MCF 10A (cell line): ENCODE measurements at regions of chr5 and their contacts with region 1.

Region 1: DNA sequence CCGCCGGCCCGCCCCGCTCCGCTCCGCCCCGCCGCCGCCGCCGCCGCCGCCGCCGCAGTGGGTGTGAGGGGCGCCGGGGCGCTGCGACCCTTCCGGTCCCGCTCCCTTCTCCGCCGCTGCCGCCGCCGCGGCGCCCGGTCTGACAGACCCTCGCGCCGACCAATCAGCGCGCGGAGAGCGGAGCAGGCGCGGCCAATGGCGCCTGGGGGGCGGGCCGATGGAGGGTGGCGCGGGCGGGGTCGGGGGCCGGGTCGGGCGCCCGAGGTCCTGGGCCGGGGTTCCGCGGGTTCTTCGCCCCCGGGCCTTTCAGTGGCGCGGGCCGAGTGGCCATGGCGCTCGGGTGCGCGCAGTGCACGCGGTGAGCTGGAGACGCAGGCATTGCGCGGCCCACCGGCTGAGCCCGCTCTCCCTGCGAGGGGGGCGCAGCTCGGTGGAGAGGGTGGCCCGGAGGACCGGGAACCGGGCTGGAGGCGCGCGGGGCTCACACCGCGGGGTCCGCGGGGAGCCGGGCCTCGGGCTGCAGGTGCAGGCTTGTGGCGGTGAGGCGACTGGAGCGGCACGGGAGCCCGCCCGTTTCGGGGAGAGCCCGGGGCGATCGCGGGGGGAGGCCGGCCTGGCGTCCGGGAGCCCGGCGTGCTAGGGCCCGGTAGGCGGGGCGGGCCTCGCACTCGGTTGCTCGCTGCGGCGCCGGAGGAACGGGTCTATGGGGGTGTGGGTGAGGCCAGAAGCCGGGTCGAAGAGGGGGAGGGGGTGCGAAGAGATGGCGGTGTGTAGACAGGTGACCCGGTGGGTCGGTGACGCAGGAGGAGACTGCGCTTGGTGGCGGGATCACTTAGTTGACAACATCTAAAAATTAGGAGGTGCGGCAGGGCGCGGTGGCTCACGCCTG is at the start of gene MAPK9:
- DNase-seq: peak; percentile 89
- H3K4me3 Mint-ChIP-seq: peak within 1 kb of the TSS; percentile 71
- H3K27ac Mint-ChIP-seq: peak within 1 kb of the TSS; percentile 81
- H3K4me1 Mint-ChIP-seq: peaks cover 52% of the 10 kb centered on the region
- H3K27me3 Mint-ChIP-seq: no peaks in the 10 kb centered on the region
- CTCF ChIP-seq: no peak
- total RNA-seq, gene MAPK9: 64.0 and 70.8 TPM in 2 replicates

Region 2: GRCh38 chr5:180116077-180116999 is 175.8 kb before region 1 on chr5:
- CTCF ChIA-PET with region 1: no interaction called
- POLR2A ChIA-PET with region 1: no interaction called
- intact Hi-C with region 1: no loop called
- DNase-seq: no peak
- H3K4me3 Mint-ChIP-seq: no peak overlapping the region
- H3K27ac Mint-ChIP-seq: no peak overlapping the region
- H3K4me1 Mint-ChIP-seq: no peaks in the 10 kb centered on the region
- H3K27me3 Mint-ChIP-seq: no peaks in the 10 kb centered on the region
- CTCF ChIP-seq: no peak

Region 3: DNA sequence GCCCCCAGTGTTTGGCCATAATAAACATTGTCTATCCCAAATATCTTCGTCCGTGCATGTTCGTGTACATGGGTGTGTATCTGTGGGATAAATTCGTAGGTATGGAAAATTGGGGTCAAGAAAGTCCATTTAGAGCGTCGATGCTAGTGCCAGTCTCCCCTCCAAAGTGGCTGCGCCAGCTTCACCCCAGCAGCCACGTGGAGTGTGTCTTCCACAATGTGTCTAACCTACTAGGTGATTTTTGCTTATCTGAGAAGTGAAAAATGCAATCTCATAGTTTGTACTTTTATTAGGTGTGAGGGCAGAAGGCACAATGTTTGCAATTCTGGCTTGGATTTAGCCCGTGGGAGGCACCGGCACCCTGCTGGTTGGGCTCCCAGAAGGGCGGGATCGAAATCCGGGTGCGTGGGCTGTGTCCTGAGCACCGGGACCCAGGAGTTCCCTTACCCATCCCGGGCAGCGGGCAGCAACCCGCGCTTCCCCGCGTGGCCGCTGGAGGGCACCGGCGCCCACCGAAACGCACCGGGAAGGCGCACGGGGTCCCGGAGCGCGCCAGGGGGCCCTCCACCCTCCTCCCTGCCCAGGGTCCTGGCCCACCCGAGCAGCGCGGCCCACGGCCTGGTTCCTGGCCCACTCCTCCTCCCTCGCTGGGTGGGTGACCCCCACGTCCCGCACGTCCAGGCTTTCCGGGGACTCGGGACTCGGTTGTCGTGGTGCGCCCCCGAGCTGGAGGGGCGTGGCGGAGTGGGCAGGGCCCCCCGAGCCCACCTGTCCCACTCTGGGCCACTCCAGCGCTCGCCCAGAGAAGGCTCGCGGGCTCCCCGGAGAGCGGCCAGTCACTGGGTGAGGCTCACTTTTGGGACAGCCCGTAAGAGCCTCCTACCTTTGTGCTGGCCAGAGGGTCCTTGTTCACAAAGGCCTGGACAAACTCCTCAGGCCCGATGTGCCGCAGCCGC is 165.2 kb before region 1 on chr5:
- CTCF ChIA-PET with region 1: interaction called, 8 read pairs
- POLR2A ChIA-PET with region 1: interaction called, 3 read pairs
- intact Hi-C with region 1: loop called (anchors 2 kb)
- DNase-seq: peak; percentile 58
- H3K4me3 Mint-ChIP-seq: no peak overlapping the region
- H3K27ac Mint-ChIP-seq: no peak overlapping the region
- H3K4me1 Mint-ChIP-seq: peaks cover 17% of the 10 kb centered on the region
- H3K27me3 Mint-ChIP-seq: peaks cover 32% of the 10 kb centered on the region
- CTCF ChIP-seq: peak; percentile 99

Region 4: DNA sequence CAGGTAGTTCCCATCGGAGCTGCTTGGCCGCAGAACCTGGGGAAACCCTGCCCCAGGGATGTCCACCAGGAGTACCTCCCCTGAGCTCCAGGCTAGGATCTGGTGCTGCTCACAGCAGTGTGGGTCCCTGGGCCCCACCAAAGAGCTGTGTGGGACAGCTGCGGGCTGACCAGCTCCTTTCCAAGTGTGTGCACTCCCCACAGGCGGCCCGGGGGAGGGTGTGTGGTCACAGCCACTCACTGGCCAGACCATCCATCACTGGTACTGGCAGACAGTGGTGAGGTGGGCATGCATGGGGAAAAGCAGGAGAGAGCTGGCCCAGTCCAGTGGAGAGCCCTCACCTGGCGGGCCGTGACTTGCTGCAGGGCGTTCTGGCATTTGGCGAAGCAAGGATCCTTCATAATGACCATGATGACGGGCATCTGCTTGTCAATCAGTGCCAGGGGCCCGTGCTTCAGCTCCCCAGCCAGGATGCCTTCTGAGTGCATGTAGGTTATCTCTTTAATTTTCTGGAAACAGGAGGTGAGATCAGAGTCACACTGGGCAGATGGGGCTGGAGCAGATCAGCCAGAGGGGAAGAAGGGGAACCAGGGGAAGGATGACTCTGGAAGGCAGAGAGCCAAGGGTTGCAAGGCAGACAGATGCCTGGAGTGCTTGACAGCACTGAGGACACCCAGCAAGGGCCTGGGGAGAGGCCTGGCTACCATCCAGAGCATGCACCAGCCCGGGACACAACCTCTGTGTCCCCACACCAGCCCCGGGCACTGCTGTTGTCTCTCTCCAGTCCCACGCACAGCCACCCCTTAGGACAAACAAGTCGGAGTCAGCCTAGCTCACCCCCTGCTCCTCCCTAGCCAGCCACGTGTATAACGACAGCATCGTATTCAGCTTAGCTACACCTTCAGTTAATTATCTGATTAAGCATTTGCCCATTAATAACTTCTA is 12.5 kb after region 1 on chr5:
- CTCF ChIA-PET with region 1: interaction called, 21 read pairs
- POLR2A ChIA-PET with region 1: interaction called, 7 read pairs
- intact Hi-C with region 1: no loop called
- DNase-seq: no peak
- H3K4me3 Mint-ChIP-seq: no peak overlapping the region
- H3K27ac Mint-ChIP-seq: no peak overlapping the region
- H3K4me1 Mint-ChIP-seq: no peaks in the 10 kb centered on the region
- H3K27me3 Mint-ChIP-seq: peaks cover 12% of the 10 kb centered on the region
- CTCF ChIP-seq: no peak

Region 5: DNA sequence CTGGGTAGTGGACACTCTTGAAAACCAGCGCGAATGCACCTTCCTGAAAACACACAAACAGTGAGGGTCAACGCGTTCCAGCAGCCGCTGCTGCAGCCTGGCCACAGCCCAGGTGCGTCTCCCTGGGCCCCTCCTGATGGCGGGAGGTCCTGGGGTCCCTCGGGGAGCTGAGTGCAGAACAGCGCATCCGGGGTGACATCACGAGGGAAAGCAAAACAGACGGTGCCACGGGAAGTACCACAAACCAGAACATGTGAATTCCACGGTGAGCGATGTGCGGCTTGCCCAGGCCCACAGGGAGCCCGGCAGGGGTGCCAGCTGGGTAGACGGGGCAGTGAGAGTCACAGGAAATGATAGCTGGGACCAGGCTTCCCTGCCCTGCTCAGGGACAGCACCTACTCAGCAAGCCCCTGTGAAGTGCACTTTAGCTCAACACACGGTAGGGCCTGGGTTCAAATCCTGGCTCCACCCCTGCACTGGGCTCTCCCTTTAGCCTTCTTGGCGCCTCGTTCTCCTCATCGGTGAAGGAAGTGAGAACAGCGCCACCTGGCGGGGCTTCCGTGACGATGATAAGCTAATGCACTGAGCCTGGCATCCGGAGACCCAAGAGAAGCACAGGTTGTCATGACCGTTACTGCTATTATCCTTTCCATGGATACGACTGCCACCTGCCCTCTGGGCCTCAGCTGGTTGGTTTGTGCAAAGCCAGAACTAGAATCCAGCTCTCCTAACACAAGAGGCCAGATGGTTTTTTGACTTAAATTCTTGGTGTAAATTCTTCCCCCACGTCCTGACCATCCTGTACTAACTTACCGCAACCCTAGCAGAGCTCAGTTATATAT is 36.3 kb after region 1 on chr5:
- CTCF ChIA-PET with region 1: interaction called, 103 read pairs
- POLR2A ChIA-PET with region 1: interaction called, 15 read pairs
- intact Hi-C with region 1: loop called (anchors 1 kb)
- DNase-seq: peak; percentile 97
- H3K4me3 Mint-ChIP-seq: no peak overlapping the region
- H3K27ac Mint-ChIP-seq: no peak overlapping the region
- H3K4me1 Mint-ChIP-seq: peaks cover 40% of the 10 kb centered on the region
- H3K27me3 Mint-ChIP-seq: no peaks in the 10 kb centered on the region
- CTCF ChIP-seq: peak; percentile 93

Region 6: DNA sequence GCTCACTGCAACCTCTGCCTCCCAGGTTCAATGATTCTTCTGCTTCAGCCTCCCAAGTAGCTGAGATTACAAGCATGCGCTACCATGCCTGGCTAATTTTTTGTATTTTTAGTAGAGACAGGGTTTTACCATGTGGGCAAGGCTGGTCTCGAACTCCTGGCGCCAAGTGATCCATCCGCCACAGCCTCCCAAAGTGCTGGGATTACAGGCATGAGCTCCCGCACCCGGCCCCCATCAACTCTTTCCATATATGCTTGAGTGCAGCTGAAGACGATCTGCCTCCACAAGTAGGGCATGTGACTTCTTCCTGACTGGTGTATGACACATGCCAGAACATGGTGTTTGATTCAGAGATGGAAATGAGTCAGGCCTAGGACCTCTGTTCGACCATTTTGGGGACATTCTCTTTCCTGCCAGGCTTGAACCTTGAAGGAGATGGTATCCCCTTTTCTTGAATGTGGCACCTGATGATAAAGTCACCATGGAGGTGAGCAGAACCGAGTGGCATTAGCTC is 194.5 kb after region 1 on chr5:
- CTCF ChIA-PET with region 1: interaction called, 5 read pairs
- POLR2A ChIA-PET with region 1: interaction called, 5 read pairs
- intact Hi-C with region 1: loop called (anchors 1 kb)
- DNase-seq: no peak
- H3K4me3 Mint-ChIP-seq: no peak overlapping the region
- H3K27ac Mint-ChIP-seq: no peak overlapping the region
- H3K4me1 Mint-ChIP-seq: peaks cover 7% of the 10 kb centered on the region
- H3K27me3 Mint-ChIP-seq: no peaks in the 10 kb centered on the region
- CTCF ChIP-seq: no peak

Region 7: GRCh38 chr5:180605554-180606214 is 313.5 kb after region 1 on chr5:
- CTCF ChIA-PET with region 1: interaction called, 8 read pairs
- POLR2A ChIA-PET with region 1: interaction called, 4 read pairs
- intact Hi-C with region 1: loop called (anchors 1 kb)
- DNase-seq: peak; percentile 85
- H3K4me3 Mint-ChIP-seq: no peak overlapping the region
- H3K27ac Mint-ChIP-seq: no peak overlapping the region
- H3K4me1 Mint-ChIP-seq: peaks cover 17% of the 10 kb centered on the region
- H3K27me3 Mint-ChIP-seq: peaks cover 16% of the 10 kb centered on the region
- CTCF ChIP-seq: peak; percentile 95

Region 8: GRCh38 chr5:180636403-180637075 is 344.4 kb after region 1 on chr5:
- CTCF ChIA-PET with region 1: no interaction called
- POLR2A ChIA-PET with region 1: no interaction called
- intact Hi-C with region 1: no loop called
- DNase-seq: no peak
- H3K4me3 Mint-ChIP-seq: no peak overlapping the region
- H3K27ac Mint-ChIP-seq: no peak overlapping the region
- H3K4me1 Mint-ChIP-seq: no peaks in the 10 kb centered on the region
- H3K27me3 Mint-ChIP-seq: peaks cover 18% of the 10 kb centered on the region
- CTCF ChIP-seq: no peak

Region 9: DNA sequence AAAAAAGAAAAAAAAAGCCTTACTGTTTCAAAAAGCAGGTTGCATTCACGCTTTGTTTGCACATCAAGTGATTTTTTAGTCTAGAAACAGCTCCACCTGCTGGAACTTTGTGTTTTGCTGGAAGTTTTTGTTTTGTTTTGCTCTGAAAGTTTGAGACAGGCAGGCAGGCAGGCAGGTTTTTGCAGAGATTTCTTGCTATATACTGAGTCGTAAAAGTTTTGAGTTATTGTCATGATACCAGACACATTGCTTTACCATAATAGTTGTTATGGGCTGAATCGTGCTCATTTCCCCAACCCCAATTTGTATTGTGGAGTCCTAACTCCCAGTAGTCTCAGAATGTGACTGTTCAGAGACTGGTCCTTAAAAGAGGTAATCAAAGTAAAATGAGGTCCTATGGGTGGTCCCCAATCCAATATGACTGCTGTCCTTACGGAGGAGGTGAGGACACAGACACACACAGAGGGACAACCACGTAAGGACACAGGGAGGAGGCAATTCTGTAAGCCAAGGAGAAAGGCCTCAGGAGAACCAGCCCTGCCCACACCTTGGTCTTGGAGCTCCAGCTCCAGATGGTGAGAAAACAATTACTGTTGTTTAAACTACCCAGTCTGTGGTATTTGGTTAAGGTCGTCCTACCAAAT is 426.7 kb after region 1 on chr5:
- CTCF ChIA-PET with region 1: interaction called, 4 read pairs
- POLR2A ChIA-PET with region 1: no interaction called
- intact Hi-C with region 1: loop called (anchors 2 kb)
- DNase-seq: peak; percentile 62
- H3K4me3 Mint-ChIP-seq: no peak overlapping the region
- H3K27ac Mint-ChIP-seq: no peak overlapping the region
- H3K4me1 Mint-ChIP-seq: no peaks in the 10 kb centered on the region
- H3K27me3 Mint-ChIP-seq: peaks cover 62% of the 10 kb centered on the region
- CTCF ChIP-seq: peak; percentile 81